ENCODE measurements at regions of chr5 and their contacts with region 1.

Region 1: GRCh38 chr5:142713121-142713706 is 27.3 kb upstream of the FGF1 start:
- DNase-seq: no peak
- H3K4me3 ChIP-seq: peak overlapping the region; percentile 63
- H3K27me3 ChIP-seq: peaks cover 3% of the 10 kb centered on the region
- CTCF ChIP-seq: peak; percentile 76

Region 2: GRCh38 chr5:142324871-142325724 is 388.1 kb before region 1 on chr5 and contains the start of gene SPRY4:
- CTCF ChIA-PET with region 1: no interaction called
- POLR2A ChIA-PET with region 1: no interaction called
- DNase-seq: peak; percentile 87
- H3K4me3 ChIP-seq: peak within 1 kb of the TSS; percentile 93
- H3K27me3 ChIP-seq: no peaks in the 10 kb centered on the region
- CTCF ChIP-seq: peak; percentile 4; the same call in 1 of the 2 replicates
- polyA plus RNA-seq, gene SPRY4: 7.2 and 13.0 TPM in 2 replicates

Region 3: DNA sequence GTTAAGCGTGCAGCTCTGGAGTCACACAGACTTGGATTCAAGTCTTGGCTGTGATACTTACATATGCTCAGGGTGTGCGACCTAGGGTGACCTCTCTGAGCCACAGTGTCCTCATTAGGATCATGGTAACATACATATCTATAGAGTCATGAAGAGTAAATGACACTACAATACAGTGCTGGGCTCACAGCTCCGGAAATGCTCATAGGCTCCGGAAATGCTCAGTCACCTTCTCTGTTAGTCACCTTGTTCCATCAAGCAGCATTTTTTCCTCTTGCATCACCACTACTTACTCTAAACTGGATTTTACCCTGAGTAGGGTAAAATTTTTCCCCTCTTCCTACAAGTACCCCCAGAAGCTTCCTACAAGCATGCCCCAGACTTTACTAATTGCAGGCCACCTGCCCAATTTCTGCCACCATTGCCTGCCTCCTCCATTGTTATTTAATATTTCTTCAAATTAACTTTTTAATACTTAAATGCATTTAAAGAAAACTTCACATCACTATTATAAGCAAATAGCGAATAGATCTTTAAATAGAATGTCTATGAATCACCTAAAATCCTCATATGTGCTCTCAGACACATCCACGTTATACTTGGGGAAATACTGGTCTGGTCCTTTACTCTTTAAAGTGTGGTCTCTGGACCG is 240.8 kb before region 1 on chr5:
- CTCF ChIA-PET with region 1: no interaction called
- POLR2A ChIA-PET with region 1: no interaction called
- DNase-seq: peak; percentile 71
- H3K4me3 ChIP-seq: no peak overlapping the region
- H3K27me3 ChIP-seq: no peaks in the 10 kb centered on the region
- CTCF ChIP-seq: no peak

Region 4: DNA sequence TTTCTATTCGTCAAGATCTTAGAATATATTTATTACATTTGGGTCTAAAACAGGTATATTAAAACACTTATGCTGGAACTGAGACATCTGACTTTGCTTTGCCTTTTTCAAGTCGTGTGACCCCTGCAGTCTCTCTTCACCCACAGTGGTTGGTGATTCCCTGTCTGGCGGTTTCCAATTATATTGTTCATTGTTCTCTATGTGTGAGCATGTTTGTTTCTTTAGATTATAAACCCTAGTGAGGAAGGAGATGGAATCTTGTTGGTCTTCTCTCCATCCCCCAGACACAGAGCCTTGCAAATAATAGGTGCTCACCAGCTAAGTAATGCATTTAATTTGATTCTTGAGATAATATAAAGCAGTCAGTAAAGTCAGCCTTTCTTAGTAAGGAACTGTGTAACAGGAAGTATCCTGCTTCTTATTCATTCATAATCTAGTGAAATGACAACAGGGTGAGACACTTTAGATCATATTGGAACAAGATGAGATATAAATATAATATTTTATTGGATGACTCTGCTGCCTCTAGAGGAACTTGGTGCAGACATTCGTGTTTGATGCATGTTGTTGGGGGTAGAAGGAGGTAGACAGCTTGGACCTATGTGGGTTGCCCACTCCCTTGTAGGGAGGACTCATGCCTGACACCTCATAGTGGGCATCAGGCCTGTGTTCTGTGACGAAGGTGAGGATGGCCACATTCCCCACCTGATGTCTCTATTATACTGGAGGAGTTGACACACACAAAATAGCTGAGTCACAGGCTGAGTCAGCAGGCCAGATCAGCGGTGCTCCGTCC is 115.5 kb before region 1 on chr5:
- CTCF ChIA-PET with region 1: interaction called, 13 read pairs
- POLR2A ChIA-PET with region 1: no interaction called
- DNase-seq: no peak
- H3K4me3 ChIP-seq: no peak overlapping the region
- H3K27me3 ChIP-seq: no peaks in the 10 kb centered on the region
- CTCF ChIP-seq: peak; percentile 24; the same call in 1 of the 2 replicates

Region 5: GRCh38 chr5:142644640-142645361 is 68.4 kb before region 1 on chr5:
- CTCF ChIA-PET with region 1: interaction called, 20 read pairs
- POLR2A ChIA-PET with region 1: no interaction called
- DNase-seq: peak; percentile 99
- H3K4me3 ChIP-seq: no peak overlapping the region
- H3K27me3 ChIP-seq: no peaks in the 10 kb centered on the region
- CTCF ChIP-seq: no peak

Region 6: GRCh38 chr5:142685418-142686209 is 27.6 kb before region 1 on chr5 and contains the start of gene FGF1:
- CTCF ChIA-PET with region 1: interaction called, 12 read pairs
- POLR2A ChIA-PET with region 1: no interaction called
- DNase-seq: no peak
- H3K4me3 ChIP-seq: no peak within 1 kb of the TSS
- H3K27me3 ChIP-seq: peaks cover 2% of the 10 kb centered on the region; the same call in 1 of the 2 replicates
- CTCF ChIP-seq: no peak
- polyA plus RNA-seq, gene FGF1: 14.8 and 19.2 TPM in 2 replicates

Region 7: GRCh38 chr5:142740474-142741242 is 27.4 kb after region 1 on chr5:
- CTCF ChIA-PET with region 1: interaction called, 14 read pairs
- POLR2A ChIA-PET with region 1: no interaction called
- DNase-seq: peak; percentile 77
- H3K4me3 ChIP-seq: no peak overlapping the region
- H3K27me3 ChIP-seq: no peaks in the 10 kb centered on the region
- CTCF ChIP-seq: no peak

Region 8: GRCh38 chr5:142783601-142784341 is 70.6 kb after region 1 on chr5:
- CTCF ChIA-PET with region 1: interaction called, 17 read pairs
- POLR2A ChIA-PET with region 1: no interaction called
- DNase-seq: no peak
- H3K4me3 ChIP-seq: no peak overlapping the region
- H3K27me3 ChIP-seq: no peaks in the 10 kb centered on the region
- CTCF ChIP-seq: no peak

Region 9: GRCh38 chr5:142888469-142889085 is 175.4 kb after region 1 on chr5:
- CTCF ChIA-PET with region 1: interaction called, 1,105 read pairs
- POLR2A ChIA-PET with region 1: no interaction called
- DNase-seq: no peak
- H3K4me3 ChIP-seq: no peak overlapping the region
- H3K27me3 ChIP-seq: no peaks in the 10 kb centered on the region; the same call in 1 of the 2 replicates
- CTCF ChIP-seq: peak; percentile 68

Measured in BJ (cell line).